ENCODE measurements at regions of chr12 and their contacts with region 1.

Region 1: GRCh38 chr12:50167041-50167828 is at the start of gene CERS5:
- DNase-seq: peak; percentile 96
- ATAC-seq: peak; percentile 98
- H3K4me3 ChIP-seq: peak within 1 kb of the TSS; percentile 80 to 98 (median 93)
- H3K27ac ChIP-seq: peak within 1 kb of the TSS; percentile 90
- H3K4me1 ChIP-seq: peaks cover 51% of the 10 kb centered on the region
- H3K27me3 ChIP-seq: no peaks in the 10 kb centered on the region; a peak in 1 of 5 replicates
- CTCF ChIP-seq: no peak; the same call in none of the 2 replicates
- EP300 ChIP-seq: 0 out of 4 replicates have a peak, but pooled peaks of 1 of the 2 experiments have one; percentile 3
- POLR2A ChIP-seq: peak; percentile 71 to 87
- RAD21 ChIP-seq: peak; percentile 67
- total RNA-seq, gene CERS5: 15.3 and 22.3 TPM in 2 replicates

Region 2: GRCh38 chr12:50111693-50112455 is 55.4 kb before region 1 on chr12 and contains the start of gene COX14:
- CTCF ChIA-PET with region 1: no interaction called
- POLR2A ChIA-PET with region 1: interaction called, 60 read pairs
- in situ Hi-C with region 1: no loop called
- intact Hi-C with region 1: loop called (anchors 2 kb)
- DNase-seq: peak; percentile 99
- ATAC-seq: peak; percentile 82
- H3K4me3 ChIP-seq: peak within 1 kb of the TSS; percentile 90 to 94 (median 92)
- H3K27ac ChIP-seq: peak within 1 kb of the TSS; percentile 95
- H3K4me1 ChIP-seq: peaks cover 56% of the 10 kb centered on the region
- H3K27me3 ChIP-seq: no peaks in the 10 kb centered on the region; a peak in 1 of 5 replicates
- CTCF ChIP-seq: peak; percentile 97
- EP300 ChIP-seq: peak in 1 of 2 experiments; percentile 21; a peak in 1 of 4 replicates
- POLR2A ChIP-seq: peak in 1 of 2 experiments; percentile 97; a peak in 2 of 4 replicates
- RAD21 ChIP-seq: peak; percentile 50
- total RNA-seq, gene COX14: 71.6 and 82.0 TPM in 2 replicates